Activated CD4-positive, alpha-beta memory T cell treated with anti-CD3 and anti-CD28 coated beads, Interleukin-2, amount 10 ng/mL, durations not matched to agents 7 days and 5 days (primary cell): ENCODE measurements at regions of chr11 and their contacts with region 1.

Region 1: GRCh38 chr11:28107748-28108618 is at the starts of genes KIF18A and METTL15:
- DNase-seq: peak; percentile 99
- H3K4me3 Mint-ChIP-seq: peak within 1 kb of the TSS; percentile 98
- H3K27ac Mint-ChIP-seq: peak within 1 kb of the TSS; percentile 98
- H3K4me1 Mint-ChIP-seq: peaks cover 61% of the 10 kb centered on the region
- H3K27me3 Mint-ChIP-seq: no peaks in the 10 kb centered on the region
- total RNA-seq, gene KIF18A: 26.0 to 26.7 TPM
- total RNA-seq, gene METTL15: 12.3 to 12.4 TPM

Region 2: GRCh38 chr11:28077521-28077920 is 30.5 kb before region 1 on chr11:
- CTCF ChIA-PET with region 1: interaction called, 3 read pairs
- POLR2A ChIA-PET with region 1: interaction called, 13 read pairs
- DNase-seq: no peak
- H3K4me3 Mint-ChIP-seq: no peak overlapping the region
- H3K27ac Mint-ChIP-seq: no peak overlapping the region
- H3K4me1 Mint-ChIP-seq: no peaks in the 10 kb centered on the region
- H3K27me3 Mint-ChIP-seq: no peaks in the 10 kb centered on the region